Right lobe of liver (tissue), 6 donors: ENCODE measurements at regions of chr17 and their contacts with region 1.

Region 1: GRCh38 chr17:81471804-81472456 is 40.7 kb downstream of the ACTG1 start:
- DNase-seq: no peak
- ATAC-seq: peak in 2 of 4 donors; percentile 13 to 27
- H3K4me3 ChIP-seq: no peak overlapping the region
- H3K27ac ChIP-seq: no peak overlapping the region
- H3K4me1 ChIP-seq: no peaks in the 10 kb centered on the region
- H3K27me3 ChIP-seq: no peaks in the 10 kb centered on the region
- CTCF ChIP-seq: no peak
- POLR2A ChIP-seq: no peak

Region 2: DNA sequence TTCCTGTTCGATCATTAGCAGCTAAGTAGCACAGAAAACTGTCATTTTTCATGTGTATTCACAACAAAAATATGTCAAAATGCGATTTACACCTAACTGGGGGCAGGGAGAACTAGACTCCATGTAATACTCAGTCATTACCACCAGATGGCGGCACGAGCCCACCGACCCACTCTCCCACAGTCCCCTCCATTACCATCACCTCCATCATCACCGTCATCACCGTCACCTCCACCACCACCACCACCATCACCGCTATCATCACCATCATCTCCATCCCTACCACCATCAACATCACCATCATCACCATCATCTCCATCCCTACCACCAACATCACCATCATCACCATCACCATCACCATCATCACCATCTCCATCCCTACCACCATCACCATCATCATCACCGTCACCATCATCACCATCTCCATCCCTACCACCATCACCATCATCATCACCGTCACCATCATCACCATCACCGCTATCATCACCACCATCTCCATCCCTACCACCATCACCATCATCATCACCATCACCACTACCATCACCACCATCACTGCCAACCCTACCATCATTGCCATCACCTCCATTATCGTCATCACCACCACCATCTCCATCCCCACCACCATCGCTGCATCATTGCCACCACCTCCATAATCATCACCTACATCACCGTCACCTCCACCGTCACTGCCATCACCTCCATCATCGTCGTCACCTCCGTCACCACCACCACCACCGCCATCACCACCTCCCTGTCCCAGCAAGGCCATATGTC is 218.4 kb before region 1 on chr17:
- intact Hi-C with region 1: loop called in 1 of 2 experiments (anchors 10 kb)
- DNase-seq: no peak
- ATAC-seq: peak; percentile 28 to 68 (median 42)
- H3K4me3 ChIP-seq: no peak overlapping the region
- H3K27ac ChIP-seq: no peak overlapping the region
- H3K4me1 ChIP-seq: peaks cover 0 to 22% (median 0%) of the 10 kb centered on the region in 4 donors
- H3K27me3 ChIP-seq: no peaks in the 10 kb centered on the region
- CTCF ChIP-seq: peak; percentile 64 to 80 (median 68)
- POLR2A ChIP-seq: no peak

Region 3: DNA sequence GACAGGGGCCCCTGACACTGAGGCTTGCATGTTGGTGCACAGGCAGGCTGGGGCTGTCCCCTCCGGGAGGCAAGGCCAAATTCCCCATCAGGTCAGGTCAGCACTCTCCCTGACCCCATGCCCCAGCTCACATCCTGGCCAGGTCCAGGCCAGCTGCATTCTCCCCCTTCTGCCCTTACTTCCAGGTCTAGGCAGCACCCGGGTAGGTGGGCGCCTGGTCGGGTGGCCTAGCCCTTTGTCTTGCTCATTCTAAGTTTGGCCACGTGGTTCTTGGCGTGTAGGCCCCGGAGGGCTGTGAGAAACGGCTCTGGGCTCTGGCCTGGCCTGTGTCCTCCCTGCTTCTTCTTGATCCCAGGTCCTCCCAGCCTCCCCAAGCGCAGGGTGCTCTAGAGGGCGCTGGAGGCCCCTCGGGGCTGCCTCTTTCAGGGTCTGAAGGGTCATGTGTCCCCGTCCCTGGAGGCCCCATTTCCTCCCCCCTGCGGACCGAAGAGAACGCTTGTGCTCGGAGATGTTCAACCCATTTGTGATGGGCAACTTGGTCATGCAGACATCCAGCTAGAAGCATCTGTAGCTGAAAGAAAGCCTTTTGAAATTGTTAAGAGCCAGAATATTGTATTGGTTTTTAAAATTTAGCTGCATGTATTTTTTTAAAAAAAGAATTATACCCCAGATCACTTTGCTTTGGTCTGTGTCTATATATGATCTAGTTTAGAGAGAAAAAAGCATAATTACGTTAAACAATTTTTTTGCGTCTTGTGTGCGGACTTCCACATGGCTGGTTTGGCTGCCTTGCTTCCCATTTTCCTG is 70.0 kb before region 1 on chr17:
- intact Hi-C with region 1: loop called in 1 of 2 experiments (anchors 10 kb)
- DNase-seq: no peak
- ATAC-seq: peak in 3 of 4 donors; percentile 9 to 12 (median 11)
- H3K4me3 ChIP-seq: no peak overlapping the region
- H3K27ac ChIP-seq: peak overlapping the region in 1 of 3 donors; percentile 28
- H3K4me1 ChIP-seq: peaks cover 0 to 32% (median 11%) of the 10 kb centered on the region in 4 donors
- H3K27me3 ChIP-seq: no peaks in the 10 kb centered on the region
- CTCF ChIP-seq: peak in 2 of 4 donors; percentile 8 to 25
- POLR2A ChIP-seq: no peak